H1 (cell line): ENCODE measurements at regions of chr19 and their contacts with region 1.

Region 1: DNA sequence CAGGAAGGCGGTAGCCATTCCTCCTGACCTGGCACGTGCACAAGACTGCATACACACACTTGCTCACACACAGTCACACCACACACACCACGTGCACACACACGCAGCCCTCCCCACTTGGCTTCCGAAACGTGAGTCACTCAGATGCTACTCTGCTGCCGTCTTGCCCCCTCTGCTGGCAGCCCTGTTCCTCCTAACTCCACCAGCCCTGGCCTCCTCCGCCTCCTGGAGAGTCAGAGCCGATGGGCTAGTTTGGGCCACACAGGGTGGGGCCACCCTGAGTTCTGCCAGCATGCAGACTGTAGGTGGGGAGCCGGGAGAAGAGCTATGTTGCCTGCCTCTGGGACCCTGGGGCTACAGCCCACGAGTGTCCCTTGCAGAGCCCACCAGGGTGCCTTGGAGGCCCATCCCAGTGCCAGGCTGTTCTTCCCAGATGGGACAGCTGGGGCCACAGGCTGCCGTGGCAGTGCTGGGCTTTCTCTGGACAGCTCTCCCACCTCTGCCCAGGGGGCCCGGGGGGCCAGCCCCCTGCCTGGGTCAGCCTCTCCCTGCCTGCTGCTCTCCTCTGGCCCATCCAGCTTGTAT is 12.1 kb downstream of the PIN1 start:
- DNase-seq: peak; percentile 51 to 79
- H3K4me3 ChIP-seq: no peak overlapping the region
- H3K27ac ChIP-seq: no peak overlapping the region
- H3K4me1 ChIP-seq: peaks cover 0 to 16% (median 9%) of the 10 kb centered on the region in 4 experiments; a peak in 6 of 7 replicates
- H3K27me3 ChIP-seq: no peaks in the 10 kb centered on the region
- CTCF ChIP-seq: peak; percentile 68 to 96 (median 93)
- EP300 ChIP-seq: no peak
- POLR2A ChIP-seq: no peak
- RAD21 ChIP-seq: peak; percentile 53 to 66

Region 2: DNA sequence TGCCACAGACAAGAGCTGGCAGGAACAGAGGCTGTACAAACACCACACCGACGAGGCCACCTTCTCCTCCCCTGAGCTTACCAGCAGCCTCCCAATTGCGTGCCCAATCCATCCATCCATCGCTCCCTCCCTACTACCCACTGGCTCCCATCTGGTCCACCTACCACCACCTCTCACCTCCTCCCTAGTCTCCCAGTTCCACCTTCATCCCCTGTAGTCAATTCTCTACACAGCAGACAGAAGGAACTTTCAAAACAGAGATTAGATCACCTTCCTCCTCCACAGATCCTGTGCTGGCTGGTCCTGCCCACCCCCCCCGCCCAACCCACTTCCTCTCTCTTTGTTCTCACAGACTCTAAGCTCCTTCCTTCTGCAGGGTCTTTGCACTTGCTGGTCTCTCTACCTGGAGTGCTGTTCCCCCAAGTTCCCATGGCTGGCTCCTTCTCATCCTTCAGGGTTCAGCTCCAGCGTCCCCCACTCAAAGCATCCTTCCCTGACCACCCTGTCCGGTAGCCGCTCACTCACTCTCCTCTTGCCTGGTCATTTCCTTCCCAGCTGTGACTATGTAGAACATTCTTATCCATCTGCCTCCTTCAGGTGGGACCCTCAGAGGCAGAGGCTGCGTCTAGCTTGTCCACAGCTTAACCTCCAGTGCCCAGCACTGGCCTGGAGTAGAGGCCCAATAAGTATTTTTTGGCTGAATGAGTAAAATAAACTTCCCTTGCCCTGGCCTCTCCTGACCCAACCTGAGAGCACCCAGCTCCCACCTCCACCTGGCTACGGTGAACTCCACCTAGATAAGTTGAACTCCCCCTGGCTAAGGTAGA is 11.0 kb after region 1 on chr19:
- CTCF ChIA-PET with region 1: interaction called, 18 read pairs
- POLR2A ChIA-PET with region 1: interaction called, 4 read pairs
- DNase-seq: no peak
- H3K4me3 ChIP-seq: no peak overlapping the region
- H3K27ac ChIP-seq: no peak overlapping the region
- H3K4me1 ChIP-seq: no peaks in the 10 kb centered on the region; a peak in 1 of 7 replicates
- H3K27me3 ChIP-seq: no peaks in the 10 kb centered on the region
- CTCF ChIP-seq: no peak
- EP300 ChIP-seq: no peak
- POLR2A ChIP-seq: no peak
- RAD21 ChIP-seq: no peak